CD14-positive monocyte (primary cell): ENCODE measurements at regions of chr10 and their contacts with region 1.

Region 1: DNA sequence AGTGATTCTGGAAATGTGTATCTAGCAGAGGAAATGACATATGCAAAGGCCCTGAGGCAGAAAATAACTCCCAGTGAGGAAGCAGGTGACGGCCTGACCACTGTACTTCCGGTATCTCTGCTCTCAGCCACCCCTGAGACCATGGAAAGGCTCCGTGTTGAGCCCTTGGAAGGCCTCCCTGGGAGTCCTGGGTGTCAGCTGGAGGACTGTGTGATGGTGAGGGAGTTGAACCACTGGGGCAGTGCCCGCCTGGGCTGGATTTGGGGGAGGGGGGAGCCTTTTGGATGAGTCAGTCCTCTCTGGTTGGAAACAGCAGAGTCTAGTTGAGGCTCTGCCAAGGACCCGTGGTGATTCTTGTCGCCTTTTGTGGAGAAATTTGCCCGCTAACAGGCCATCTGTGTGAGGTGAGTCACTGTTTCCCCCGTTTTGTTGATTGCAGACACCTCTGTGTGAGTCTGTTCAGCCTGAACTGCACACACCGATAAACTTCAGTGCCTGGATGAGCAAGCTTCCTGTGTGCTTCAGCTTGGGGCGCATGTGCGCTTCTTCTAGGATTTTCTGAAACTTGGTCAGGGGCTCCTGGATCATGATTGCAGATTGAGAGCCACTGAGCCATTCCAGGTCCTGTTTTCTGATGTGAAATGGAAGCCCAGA is 98.6 kb downstream of the GRK5 start:
- DNase-seq: peak; percentile 79 to 91 (median 91)
- H3K4me3 ChIP-seq: no peak overlapping the region
- H3K4me3 Mint-ChIP-seq: peak overlapping the region; percentile 21 to 52
- H3K27ac ChIP-seq: peak overlapping the region; percentile 5 to 34
- H3K27ac Mint-ChIP-seq: peak overlapping the region in 6 of 7 donors; percentile 59 to 94 (median 80)
- H3K4me1 ChIP-seq: peaks cover 17 to 34% of the 10 kb centered on the region in 2 donors
- H3K4me1 Mint-ChIP-seq: peaks cover 43% of the 10 kb centered on the region
- H3K27me3 ChIP-seq: no peaks in the 10 kb centered on the region
- H3K27me3 Mint-ChIP-seq: peaks cover 14 to 33% (median 28%) of the 10 kb centered on the region in 3 donors
- CTCF ChIP-seq: no peak

Region 2: DNA sequence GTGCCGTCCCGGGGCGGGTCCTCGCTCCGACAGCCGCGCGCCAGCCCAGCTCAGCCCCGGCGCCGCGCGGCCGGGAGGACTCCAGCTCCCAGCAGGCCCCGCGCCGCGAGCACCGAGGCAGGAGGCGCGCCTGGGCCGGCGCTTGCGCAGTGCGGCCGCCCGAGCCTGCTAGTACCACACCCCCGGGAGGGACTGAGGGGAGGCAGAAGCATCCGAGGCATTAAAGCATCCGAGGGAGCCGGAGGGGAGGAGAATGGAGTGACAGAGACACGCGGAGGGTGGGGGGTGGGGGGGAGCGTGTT is 98.7 kb before region 1 on chr10 and contains the start of gene GRK5:
- intact Hi-C with region 1: loop called in 1 of 2 experiments (anchors 10 kb)
- DNase-seq: peak; percentile 91 to 93 (median 92)
- H3K4me3 ChIP-seq: peak within 1 kb of the TSS; percentile 48 to 85 (median 80)
- H3K4me3 Mint-ChIP-seq: peak within 1 kb of the TSS; percentile 96 to 97
- H3K27ac ChIP-seq: peak within 1 kb of the TSS; percentile 73 to 86
- H3K27ac Mint-ChIP-seq: peak within 1 kb of the TSS; percentile 90 to 98 (median 97)
- H3K4me1 ChIP-seq: peaks cover 33 to 44% of the 10 kb centered on the region in 2 donors
- H3K4me1 Mint-ChIP-seq: peaks cover 41% of the 10 kb centered on the region
- H3K27me3 ChIP-seq: no peaks in the 10 kb centered on the region
- H3K27me3 Mint-ChIP-seq: peaks cover 3 to 16% (median 16%) of the 10 kb centered on the region in 3 donors
- CTCF ChIP-seq: no peak
- polyA plus RNA-seq, gene GRK5: 1.2 to 6.5 (median 2.8) TPM

Region 3: DNA sequence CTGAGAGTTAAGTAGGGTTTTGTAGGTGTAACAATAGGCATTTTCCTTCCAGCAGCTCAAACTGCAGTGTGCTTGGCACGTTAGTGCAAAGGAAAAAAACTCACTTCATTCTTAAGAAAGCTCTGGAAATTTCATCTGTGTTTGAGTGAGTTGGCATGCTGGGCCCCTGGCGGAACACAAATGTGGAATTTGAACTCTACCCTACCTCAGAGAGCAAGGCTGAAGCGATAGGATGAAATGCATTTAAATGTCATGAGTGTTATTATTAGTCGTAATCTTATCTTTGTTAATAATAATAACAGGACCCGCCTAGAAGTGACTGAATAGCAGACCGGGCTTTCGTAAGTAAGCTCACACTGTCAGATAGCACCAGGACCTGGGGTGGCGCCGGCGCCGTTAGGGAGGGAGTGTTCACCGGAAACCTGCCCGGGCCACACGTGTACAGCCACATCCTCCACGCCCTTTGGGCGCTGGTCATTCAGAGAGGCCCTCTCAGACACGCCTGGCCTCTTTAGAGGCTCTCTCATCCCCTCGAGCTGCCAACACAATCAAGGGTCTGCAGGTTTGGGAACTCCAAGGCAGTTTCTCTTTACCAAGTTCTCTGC is 35.1 kb before region 1 on chr10:
- intact Hi-C with region 1: loop called (anchors 2 to 5 kb)
- DNase-seq: peak; percentile 70 to 83 (median 82)
- H3K4me3 ChIP-seq: peak overlapping the region in 1 of 3 experiments; percentile 52
- H3K4me3 Mint-ChIP-seq: peak overlapping the region; percentile 67 to 90
- H3K27ac ChIP-seq: peak overlapping the region; percentile 68 to 90
- H3K27ac Mint-ChIP-seq: peak overlapping the region; percentile 95 to 99 (median 99)
- H3K4me1 ChIP-seq: peaks cover 24 to 28% of the 10 kb centered on the region in 2 donors
- H3K4me1 Mint-ChIP-seq: peaks cover 40% of the 10 kb centered on the region
- H3K27me3 ChIP-seq: no peaks in the 10 kb centered on the region
- H3K27me3 Mint-ChIP-seq: peaks cover 0 to 9% (median 8%) of the 10 kb centered on the region in 3 donors
- CTCF ChIP-seq: no peak

Region 4: DNA sequence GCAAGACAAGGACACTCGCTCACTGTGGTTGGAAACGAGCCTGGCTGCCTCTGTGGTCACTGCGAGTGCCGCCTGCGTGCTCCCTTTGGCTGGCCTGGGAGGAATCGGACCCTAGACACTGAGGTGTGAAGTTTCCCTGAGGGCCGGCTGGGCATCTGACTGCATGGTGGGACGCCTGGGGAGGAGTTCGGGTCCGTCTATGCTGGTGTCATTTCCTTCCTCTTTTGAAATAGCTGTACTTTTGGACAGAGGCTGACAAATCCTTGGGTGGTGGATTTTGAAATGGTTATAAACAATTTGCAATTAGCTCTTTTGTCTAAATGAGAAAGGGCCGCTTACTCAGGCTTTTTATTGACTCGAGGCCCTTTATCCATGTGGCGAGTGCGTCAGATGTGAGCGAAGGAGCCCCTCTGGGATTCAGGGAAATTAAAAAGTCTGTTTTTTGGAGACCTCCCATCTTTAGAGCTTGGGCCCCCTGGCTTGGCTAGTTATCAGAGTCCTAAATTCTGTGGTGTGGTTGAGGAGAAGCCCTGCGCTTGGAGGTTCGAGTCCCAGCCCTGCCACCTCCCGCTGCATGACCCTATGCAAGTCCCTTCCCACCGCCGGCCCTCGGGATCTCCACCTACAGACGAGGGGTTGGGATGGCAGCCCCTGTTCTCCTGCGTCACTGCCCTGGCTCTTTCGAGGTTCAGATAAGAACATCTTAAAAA is 89.4 kb after region 1 on chr10:
- intact Hi-C with region 1: loop called in 1 of 2 experiments (anchors 10 kb)
- DNase-seq: peak; percentile 89 to 92 (median 92)
- H3K4me3 ChIP-seq: no peak overlapping the region
- H3K4me3 Mint-ChIP-seq: peak overlapping the region in 1 of 2 donors; percentile 63
- H3K27ac ChIP-seq: peak overlapping the region; percentile 94 to 96
- H3K27ac Mint-ChIP-seq: peak overlapping the region; percentile 97 to 99 (median 98)
- H3K4me1 ChIP-seq: peaks cover 37 to 39% of the 10 kb centered on the region in 2 donors
- H3K4me1 Mint-ChIP-seq: peaks cover 46% of the 10 kb centered on the region
- H3K27me3 ChIP-seq: no peaks in the 10 kb centered on the region
- H3K27me3 Mint-ChIP-seq: peaks cover 0 to 1% (median 0%) of the 10 kb centered on the region in 3 donors
- CTCF ChIP-seq: no peak

Region 5: DNA sequence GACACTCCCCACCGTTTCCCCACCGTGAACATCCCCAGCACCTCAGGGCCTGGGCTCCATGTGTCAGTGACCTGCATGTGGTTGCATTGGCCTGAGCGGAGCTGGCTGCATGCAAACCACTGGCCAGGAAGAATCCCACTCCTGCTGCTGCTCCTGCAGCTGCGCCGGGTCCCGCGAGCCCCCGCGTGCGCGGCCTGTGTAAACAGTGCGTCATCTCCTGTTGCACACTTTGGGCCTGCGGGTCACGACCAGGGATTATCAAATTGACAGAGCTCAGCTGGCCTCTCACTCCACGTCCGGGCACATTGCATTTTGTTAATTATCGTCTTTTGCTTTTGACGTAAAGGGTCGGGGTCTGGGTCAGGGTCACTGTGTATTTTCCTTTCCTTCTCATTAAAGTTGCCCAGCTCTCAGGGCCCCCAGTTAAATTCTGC is 103.9 kb after region 1 on chr10:
- intact Hi-C with region 1: loop called in 1 of 2 experiments (anchors 5 kb)
- DNase-seq: no peak
- H3K4me3 ChIP-seq: no peak overlapping the region
- H3K4me3 Mint-ChIP-seq: no peak overlapping the region
- H3K27ac ChIP-seq: no peak overlapping the region
- H3K27ac Mint-ChIP-seq: no peak overlapping the region
- H3K4me1 ChIP-seq: peaks cover 37 to 38% of the 10 kb centered on the region in 2 donors
- H3K4me1 Mint-ChIP-seq: peaks cover 42% of the 10 kb centered on the region
- H3K27me3 ChIP-seq: no peaks in the 10 kb centered on the region
- H3K27me3 Mint-ChIP-seq: peaks cover 0 to 2% (median 0%) of the 10 kb centered on the region in 3 donors
- CTCF ChIP-seq: no peak

Region 6: DNA sequence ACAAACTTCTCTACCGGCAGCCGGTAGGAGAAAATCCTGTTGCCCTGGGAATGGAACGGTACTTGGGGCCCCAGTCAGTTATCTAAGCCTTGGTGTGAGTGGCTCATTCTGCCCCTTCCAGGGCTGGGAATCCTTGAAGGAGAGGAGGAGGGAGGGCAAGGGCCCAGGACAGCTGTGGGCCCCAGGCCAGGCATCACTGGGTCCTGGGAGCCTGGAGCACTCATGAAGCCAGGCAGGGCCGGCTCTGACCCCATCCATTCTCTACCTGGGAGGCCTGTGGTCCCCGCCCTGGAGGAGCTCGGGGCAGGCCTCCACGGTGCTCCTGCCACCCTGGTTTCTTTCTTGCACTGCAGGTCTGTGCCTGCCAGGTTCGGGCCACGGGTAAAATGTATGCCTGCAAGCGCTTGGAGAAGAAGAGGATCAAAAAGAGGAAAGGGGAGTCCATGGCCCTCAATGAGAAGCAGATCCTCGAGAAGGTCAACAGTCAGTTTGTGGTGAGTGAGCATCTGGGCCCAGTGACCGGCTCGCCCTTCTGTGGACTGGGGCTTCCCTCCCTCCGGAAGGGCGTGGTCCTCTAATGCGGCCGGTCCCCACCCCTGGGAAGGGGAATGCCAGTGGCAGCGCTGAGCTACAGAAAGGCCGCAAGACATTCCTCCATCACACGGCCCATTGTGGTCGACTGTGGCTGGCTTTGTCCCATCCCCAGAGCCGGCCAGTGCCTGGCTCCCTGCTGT is 125.2 kb after region 1 on chr10:
- intact Hi-C with region 1: no loop called
- DNase-seq: no peak
- H3K4me3 ChIP-seq: no peak overlapping the region
- H3K4me3 Mint-ChIP-seq: no peak overlapping the region
- H3K27ac ChIP-seq: no peak overlapping the region
- H3K27ac Mint-ChIP-seq: peak overlapping the region in 1 of 7 donors; percentile 50
- H3K4me1 ChIP-seq: no peaks in the 10 kb centered on the region
- H3K4me1 Mint-ChIP-seq: peaks cover 3% of the 10 kb centered on the region
- H3K27me3 ChIP-seq: no peaks in the 10 kb centered on the region
- H3K27me3 Mint-ChIP-seq: peaks cover 0 to 1% (median 0%) of the 10 kb centered on the region in 3 donors
- CTCF ChIP-seq: no peak